AG04449 (cell line): ENCODE measurements at regions of chr4 and their contacts with region 1.

Region 1: GRCh38 chr4:83771113-83771705 is 235.3 kb downstream of the GPAT3 start:
- DNase-seq: peak; percentile 24
- H3K4me3 ChIP-seq: no peak overlapping the region
- CTCF ChIP-seq: peak; percentile 84

Region 2: GRCh38 chr4:83947830-83948193 is 176.6 kb after region 1 on chr4:
- CTCF ChIA-PET with region 1: interaction called, 19 read pairs
- POLR2A ChIA-PET with region 1: no interaction called
- DNase-seq: no peak
- H3K4me3 ChIP-seq: no peak overlapping the region
- CTCF ChIP-seq: no peak

Region 3: DNA sequence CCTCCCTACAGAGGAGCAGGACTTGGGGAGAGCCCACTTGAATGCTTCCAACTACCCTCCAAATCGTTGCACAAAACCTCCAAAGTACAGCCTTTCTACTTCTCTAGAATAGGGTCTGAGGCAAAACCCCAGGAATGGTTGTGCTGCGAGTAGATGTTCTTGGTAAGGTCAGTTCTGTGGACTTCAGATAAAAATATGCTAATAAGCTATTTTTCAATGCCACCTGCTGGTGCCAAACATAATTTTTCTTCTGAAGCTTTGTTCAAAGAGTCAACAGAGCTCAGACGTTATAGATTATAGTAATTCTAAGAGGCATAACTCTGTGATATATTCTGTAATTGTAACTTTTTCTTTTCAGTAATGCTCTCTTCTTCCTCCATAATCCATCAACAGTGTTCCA is 190.4 kb after region 1 on chr4:
- CTCF ChIA-PET with region 1: interaction called, 206 read pairs
- POLR2A ChIA-PET with region 1: no interaction called
- DNase-seq: no peak
- H3K4me3 ChIP-seq: no peak overlapping the region
- CTCF ChIP-seq: peak; percentile 17

Region 4: GRCh38 chr4:84258905-84259830 is 488.0 kb after region 1 on chr4:
- CTCF ChIA-PET with region 1: interaction called, 13 read pairs
- POLR2A ChIA-PET with region 1: no interaction called
- DNase-seq: no peak
- H3K4me3 ChIP-seq: no peak overlapping the region
- CTCF ChIP-seq: peak; percentile 59